PC-9 (cell line): ENCODE measurements at regions of chr4 and their contacts with region 1.

Region 1: DNA sequence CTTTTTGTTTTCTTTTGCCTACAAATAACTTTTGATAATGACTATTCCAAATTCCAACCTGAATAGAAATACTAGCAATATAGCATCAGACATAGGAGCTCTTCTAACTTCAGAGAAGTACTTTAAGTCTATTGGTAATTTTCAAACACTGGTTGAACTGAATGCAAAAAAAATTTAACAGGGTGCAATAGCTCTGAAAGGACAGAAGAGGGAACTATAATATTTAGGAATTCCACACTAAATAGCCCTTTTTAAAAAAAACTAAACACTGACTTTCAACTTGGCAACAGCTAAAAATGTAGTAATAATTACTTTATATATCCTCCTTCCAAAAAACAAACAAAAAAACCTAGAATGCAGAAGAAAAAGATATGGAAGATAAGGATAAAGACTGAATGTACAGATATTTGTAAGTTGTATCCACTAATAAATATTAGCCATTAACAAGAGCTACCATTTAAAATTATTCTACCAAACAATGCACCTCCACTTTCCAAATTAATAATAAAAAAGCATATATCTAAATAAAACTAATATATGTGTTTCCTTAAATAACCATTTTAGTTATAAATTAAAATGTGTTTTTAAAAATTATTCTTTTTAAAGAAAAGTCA is 81.4 kb downstream of the FBXW7 start:
- DNase-seq: no peak
- H3K4me3 ChIP-seq: no peak overlapping the region
- H3K27ac ChIP-seq: no peak overlapping the region
- H3K4me1 ChIP-seq: no peaks in the 10 kb centered on the region; the same call in 1 of the 2 replicates
- H3K27me3 ChIP-seq: no peaks in the 10 kb centered on the region
- CTCF ChIP-seq: peak; percentile 70

Region 2: GRCh38 chr4:151184523-151185458 is 1269.7 kb before region 1 on chr4:
- CTCF ChIA-PET with region 1: no interaction called
- POLR2A ChIA-PET with region 1: interaction called, 22 read pairs
- intact Hi-C with region 1: no loop called
- DNase-seq: peak in 1 of 2 experiments; percentile 25
- H3K4me3 ChIP-seq: no peak overlapping the region
- H3K27ac ChIP-seq: peak overlapping the region; percentile 17; the same call in 1 of the 2 replicates
- H3K4me1 ChIP-seq: no peaks in the 10 kb centered on the region; the same call in 1 of the 2 replicates
- H3K27me3 ChIP-seq: no peaks in the 10 kb centered on the region
- CTCF ChIP-seq: no peak

Region 3: DNA sequence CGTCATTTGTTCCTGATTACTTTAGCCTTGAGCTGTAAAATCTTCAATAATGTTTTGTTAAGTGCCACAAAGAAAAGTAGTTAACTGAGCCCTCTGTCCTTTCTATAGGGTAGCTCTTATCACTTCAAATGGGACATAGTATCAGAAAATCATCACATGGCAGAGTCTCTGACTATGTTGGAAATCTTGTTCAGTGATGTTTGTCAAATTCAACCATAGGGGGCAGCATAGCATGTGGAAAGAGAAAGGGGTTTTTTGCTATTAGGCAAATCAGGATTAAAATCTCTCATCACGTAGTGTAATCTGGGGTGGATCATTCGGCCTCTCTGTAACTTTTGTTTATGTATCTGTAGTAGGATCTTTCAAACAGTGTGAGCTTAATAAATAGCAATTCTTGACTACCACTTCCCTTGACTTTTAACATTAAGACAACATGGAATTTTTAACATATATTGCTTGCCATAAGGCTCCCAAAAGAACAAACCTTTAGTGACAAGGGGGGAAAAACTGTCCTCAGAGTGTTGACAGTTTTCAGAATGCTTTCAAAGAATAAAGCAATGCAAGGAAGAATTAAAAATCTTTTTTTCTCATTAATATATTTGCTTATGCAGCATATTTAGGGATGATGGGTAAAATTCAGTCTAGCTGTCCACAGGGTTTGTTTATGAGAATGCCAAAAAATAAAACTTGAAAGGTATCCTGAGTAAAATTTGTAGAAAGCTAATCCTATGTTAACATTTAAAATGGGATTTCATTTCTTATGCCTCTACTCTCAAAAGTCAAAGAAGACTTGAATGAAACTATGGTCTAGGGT is 45.8 kb before region 1 on chr4:
- CTCF ChIA-PET with region 1: no interaction called
- POLR2A ChIA-PET with region 1: no interaction called
- intact Hi-C with region 1: loop called (anchors 2 kb)
- DNase-seq: peak in 1 of 2 experiments; percentile 6
- H3K4me3 ChIP-seq: no peak overlapping the region
- H3K27ac ChIP-seq: no peak overlapping the region
- H3K4me1 ChIP-seq: no peaks in the 10 kb centered on the region
- H3K27me3 ChIP-seq: no peaks in the 10 kb centered on the region
- CTCF ChIP-seq: peak; percentile 65

Region 4: GRCh38 chr4:152594978-152595925 is 140.7 kb after region 1 on chr4:
- CTCF ChIA-PET with region 1: no interaction called
- POLR2A ChIA-PET with region 1: no interaction called
- intact Hi-C with region 1: no loop called
- DNase-seq: no peak
- H3K4me3 ChIP-seq: no peak overlapping the region
- H3K27ac ChIP-seq: no peak overlapping the region
- H3K4me1 ChIP-seq: peaks cover 16% of the 10 kb centered on the region
- H3K27me3 ChIP-seq: no peaks in the 10 kb centered on the region
- CTCF ChIP-seq: no peak

Region 5: GRCh38 chr4:152640058-152640833 is 185.7 kb after region 1 on chr4:
- CTCF ChIA-PET with region 1: no interaction called
- POLR2A ChIA-PET with region 1: no interaction called
- intact Hi-C with region 1: loop called (anchors 1 kb)
- DNase-seq: peak in 1 of 2 experiments; percentile 37
- H3K4me3 ChIP-seq: no peak overlapping the region
- H3K27ac ChIP-seq: no peak overlapping the region
- H3K4me1 ChIP-seq: no peaks in the 10 kb centered on the region
- H3K27me3 ChIP-seq: no peaks in the 10 kb centered on the region
- CTCF ChIP-seq: peak; percentile 79

Region 6: GRCh38 chr4:152735396-152735859 is 280.9 kb after region 1 on chr4:
- CTCF ChIA-PET with region 1: no interaction called
- POLR2A ChIA-PET with region 1: no interaction called
- intact Hi-C with region 1: loop called (anchors 2 kb)
- DNase-seq: no peak
- H3K4me3 ChIP-seq: no peak overlapping the region
- H3K27ac ChIP-seq: no peak overlapping the region
- H3K4me1 ChIP-seq: no peaks in the 10 kb centered on the region
- H3K27me3 ChIP-seq: no peaks in the 10 kb centered on the region
- CTCF ChIP-seq: peak; percentile 72

Region 7: DNA sequence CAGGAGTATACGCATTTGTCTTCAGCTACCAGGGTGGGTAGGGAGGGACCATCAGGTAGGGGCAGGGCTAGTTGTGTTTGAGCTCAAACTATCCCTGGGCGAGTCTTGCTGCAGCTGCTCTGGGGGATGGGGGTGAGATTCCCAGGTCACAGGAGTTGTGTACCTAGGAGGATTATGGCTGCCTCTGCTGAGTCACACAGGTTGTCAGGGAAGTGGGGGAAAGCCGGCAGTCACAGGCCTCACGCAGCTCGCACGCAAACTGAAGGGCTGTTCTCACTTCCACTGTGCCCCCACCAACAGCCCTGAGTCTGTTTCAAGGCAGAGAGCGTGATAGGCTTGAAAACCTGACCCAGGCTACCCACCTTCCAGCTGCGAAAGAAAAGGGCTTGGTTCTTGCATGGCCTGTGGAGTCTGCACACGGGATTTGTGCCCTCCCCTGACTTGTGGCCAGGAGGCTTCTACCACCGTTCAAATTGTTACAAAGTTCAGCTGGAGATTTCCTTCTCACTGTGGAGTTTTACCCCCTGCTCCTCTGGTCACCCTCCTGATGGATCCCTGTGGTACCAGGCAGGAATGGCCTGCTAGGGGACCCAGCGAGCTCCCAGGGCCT is 389.1 kb after region 1 on chr4:
- CTCF ChIA-PET with region 1: no interaction called
- POLR2A ChIA-PET with region 1: no interaction called
- intact Hi-C with region 1: loop called (anchors 10 kb)
- DNase-seq: peak in 1 of 2 experiments; percentile 44
- H3K4me3 ChIP-seq: no peak overlapping the region
- H3K27ac ChIP-seq: no peak overlapping the region
- H3K4me1 ChIP-seq: no peaks in the 10 kb centered on the region
- H3K27me3 ChIP-seq: no peaks in the 10 kb centered on the region
- CTCF ChIP-seq: no peak